Natural killer cell (primary cell): ENCODE measurements at regions of chr14 and their contacts with region 1.

Region 1: DNA sequence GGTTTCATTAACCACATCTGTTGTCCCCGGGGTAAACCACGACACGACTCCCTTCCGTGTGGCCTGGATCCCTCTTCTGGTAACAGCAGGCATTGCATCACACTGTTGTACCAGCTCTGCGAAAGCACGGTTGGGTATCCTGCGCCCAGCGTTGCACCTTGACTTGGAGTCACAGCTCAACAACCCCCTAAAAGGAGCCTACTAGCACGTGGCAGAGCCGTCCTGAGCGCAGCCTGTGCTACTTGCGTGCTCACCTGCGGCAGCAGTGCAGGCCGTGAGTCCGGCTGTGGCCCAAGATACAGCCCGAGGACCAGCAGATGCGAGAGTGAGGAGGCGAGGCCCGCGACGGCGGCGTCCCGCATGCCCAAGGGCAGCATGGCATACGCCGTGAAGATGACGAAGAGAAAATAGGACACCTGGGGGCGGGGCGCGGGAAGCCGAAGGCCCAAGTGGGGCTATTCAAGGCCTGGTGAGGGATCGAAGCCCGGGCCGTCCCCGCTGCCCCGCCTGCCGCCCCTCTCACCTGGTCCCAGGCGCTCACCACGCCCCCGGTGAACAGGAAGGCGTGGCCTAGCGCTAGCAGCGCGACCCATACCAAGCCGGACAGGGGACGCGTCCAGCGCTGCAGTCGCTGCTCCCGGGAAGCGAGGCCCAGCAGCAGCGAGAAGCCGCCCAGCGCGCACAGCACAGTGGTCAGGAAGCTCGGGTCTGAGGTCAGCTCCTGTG is 2.4 kb downstream of the ADCY4 start:
- DNase-seq: peak; percentile 70 to 96
- ATAC-seq: peak; percentile 57 to 75 (median 59)
- H3K4me3 ChIP-seq: peak overlapping the region; percentile 27
- H3K4me3 Mint-ChIP-seq: peak overlapping the region; percentile 93
- H3K27ac ChIP-seq: no peak overlapping the region
- H3K27ac Mint-ChIP-seq: peak overlapping the region; percentile 87 to 88
- H3K4me1 ChIP-seq: peaks cover 80% of the 10 kb centered on the region
- H3K4me1 Mint-ChIP-seq: peaks cover 79 to 84% of the 10 kb centered on the region in 2 donors
- H3K27me3 ChIP-seq: peaks cover 15% of the 10 kb centered on the region
- H3K27me3 Mint-ChIP-seq: peaks cover 14 to 16% of the 10 kb centered on the region in 2 donors
- CTCF ChIP-seq: peak; percentile 85

Region 2: DNA sequence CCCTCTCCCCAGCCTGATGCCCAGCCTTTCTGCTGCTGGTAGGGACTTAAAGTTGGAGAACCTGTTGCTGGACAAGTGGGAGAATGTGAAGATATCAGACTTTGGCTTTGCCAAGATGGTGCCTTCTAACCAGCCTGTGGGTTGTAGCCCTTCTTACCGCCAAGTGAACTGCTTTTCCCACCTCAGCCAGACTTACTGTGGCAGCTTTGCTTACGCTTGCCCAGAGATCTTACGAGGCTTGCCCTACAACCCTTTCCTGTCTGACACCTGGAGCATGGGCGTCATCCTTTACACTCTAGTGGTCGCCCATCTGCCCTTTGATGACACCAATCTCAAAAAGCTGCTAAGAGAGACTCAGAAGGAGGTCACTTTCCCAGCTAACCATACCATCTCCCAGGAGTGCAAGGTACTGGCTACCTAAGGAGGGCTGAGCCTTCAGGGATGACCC is 125.3 kb before region 1 on chr14:
- intact Hi-C with region 1: no loop called
- DNase-seq: peak in 1 of 2 donors; percentile 50
- ATAC-seq: peak; percentile 79 to 83 (median 83)
- H3K4me3 ChIP-seq: no peak overlapping the region
- H3K4me3 Mint-ChIP-seq: peak overlapping the region; percentile 14
- H3K27ac ChIP-seq: peak overlapping the region; percentile 32
- H3K27ac Mint-ChIP-seq: peak overlapping the region; percentile 86 to 87
- H3K4me1 ChIP-seq: peaks cover 15% of the 10 kb centered on the region
- H3K4me1 Mint-ChIP-seq: peaks cover 35 to 40% of the 10 kb centered on the region in 2 donors
- H3K27me3 ChIP-seq: no peaks in the 10 kb centered on the region
- H3K27me3 Mint-ChIP-seq: no peaks in the 10 kb centered on the region
- CTCF ChIP-seq: no peak

Region 3: DNA sequence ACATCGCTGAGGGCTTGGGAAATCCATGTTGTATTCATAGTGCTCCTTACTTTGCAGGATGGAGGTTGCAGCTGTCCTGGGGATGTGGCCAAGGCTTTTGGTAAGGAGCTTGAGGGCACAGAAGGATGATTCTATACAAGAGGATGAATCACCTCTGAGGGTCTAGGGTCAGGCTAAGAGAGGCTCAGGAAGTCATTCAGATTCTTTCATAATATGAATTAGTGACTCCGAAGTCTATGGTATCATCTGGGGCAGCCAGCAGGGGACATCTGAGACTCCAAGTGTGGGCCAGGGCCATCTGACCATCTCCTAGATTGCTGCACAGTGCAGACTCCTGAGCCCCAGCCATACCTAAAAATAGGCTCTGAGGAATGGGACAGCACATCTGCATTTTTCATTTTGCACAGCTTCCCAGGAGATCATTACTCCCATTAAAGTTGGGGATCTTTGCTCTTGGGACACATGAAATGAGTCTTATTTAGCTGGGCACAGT is 94.9 kb before region 1 on chr14:
- intact Hi-C with region 1: no loop called
- DNase-seq: no peak
- ATAC-seq: no peak
- H3K4me3 ChIP-seq: no peak overlapping the region
- H3K4me3 Mint-ChIP-seq: peak overlapping the region; percentile 14
- H3K27ac ChIP-seq: no peak overlapping the region
- H3K27ac Mint-ChIP-seq: peak overlapping the region; percentile 40 to 100
- H3K4me1 ChIP-seq: peaks cover 34% of the 10 kb centered on the region
- H3K4me1 Mint-ChIP-seq: peaks cover 69 to 85% of the 10 kb centered on the region in 2 donors
- H3K27me3 ChIP-seq: no peaks in the 10 kb centered on the region
- H3K27me3 Mint-ChIP-seq: no peaks in the 10 kb centered on the region
- CTCF ChIP-seq: no peak

Region 4: DNA sequence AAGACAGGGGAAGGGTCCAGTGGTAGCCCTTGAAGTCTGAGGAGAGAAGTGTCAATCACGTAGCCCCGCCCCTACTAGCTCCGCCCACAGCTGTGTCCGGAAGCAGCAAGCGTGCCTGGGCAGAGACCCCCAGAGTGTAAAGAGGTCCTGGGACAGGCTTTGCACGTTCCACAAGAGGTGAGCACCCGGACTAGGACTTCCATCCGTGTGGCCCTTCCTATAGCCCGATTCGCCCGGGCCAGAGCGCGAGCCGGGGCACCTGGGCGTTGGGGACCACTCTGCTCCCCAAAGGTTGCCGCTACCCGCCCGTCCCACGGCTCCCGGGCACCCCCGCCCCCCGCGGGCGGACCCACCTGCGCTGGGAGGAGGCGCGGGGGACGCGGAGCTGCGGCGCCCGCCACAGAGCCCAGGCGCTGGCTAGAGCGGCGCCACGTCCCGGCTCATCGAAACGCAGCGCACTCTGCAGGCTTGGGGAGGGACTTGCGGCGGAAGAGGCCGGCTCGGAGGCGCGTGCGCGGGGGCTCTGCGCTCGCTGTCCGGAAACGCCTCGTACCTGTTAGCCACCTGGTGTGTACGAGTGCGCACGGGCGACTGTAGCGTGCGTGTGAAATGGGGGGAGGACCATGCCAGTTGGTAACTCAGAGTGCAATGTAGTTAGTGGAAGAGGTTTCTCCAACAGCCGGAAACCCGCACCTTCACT is 61.1 kb before region 1 on chr14 and contains the start of gene RABGGTA:
- intact Hi-C with region 1: loop called (anchors 1 kb)
- DNase-seq: peak; percentile 92 to 99
- ATAC-seq: peak; percentile 84 to 94 (median 87)
- H3K4me3 ChIP-seq: peak within 1 kb of the TSS; percentile 88
- H3K4me3 Mint-ChIP-seq: peak within 1 kb of the TSS; percentile 94
- H3K27ac ChIP-seq: peak within 1 kb of the TSS; percentile 99
- H3K27ac Mint-ChIP-seq: peak within 1 kb of the TSS; percentile 91 to 92
- H3K4me1 ChIP-seq: peaks cover 30% of the 10 kb centered on the region
- H3K4me1 Mint-ChIP-seq: peaks cover 25 to 30% of the 10 kb centered on the region in 2 donors
- H3K27me3 ChIP-seq: no peaks in the 10 kb centered on the region
- H3K27me3 Mint-ChIP-seq: no peaks in the 10 kb centered on the region
- CTCF ChIP-seq: peak; percentile 63
- total RNA-seq, gene RABGGTA: 72.9 to 95.1 (median 88.5) TPM

Region 5: DNA sequence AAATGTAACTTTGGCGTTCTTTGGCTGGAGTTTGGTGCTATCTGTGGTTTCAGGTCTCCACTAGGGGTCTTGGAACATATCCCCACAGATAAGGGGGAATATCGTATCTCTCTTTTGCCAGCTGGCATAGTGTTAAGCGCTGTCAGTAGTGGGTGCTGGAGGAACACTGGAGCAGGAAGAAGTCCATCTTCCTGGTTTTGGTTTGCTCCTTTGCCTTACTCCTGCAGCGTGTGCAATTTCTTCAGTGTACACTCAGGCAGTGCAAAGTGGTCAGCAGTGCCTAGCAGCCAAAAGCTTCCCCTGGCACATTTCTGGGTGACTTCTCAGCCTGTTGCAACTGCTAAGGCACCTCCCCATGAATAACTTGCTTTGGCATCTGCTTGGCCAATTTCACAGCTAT is 19.1 kb after region 1 on chr14:
- intact Hi-C with region 1: no loop called
- DNase-seq: no peak
- ATAC-seq: no peak
- H3K4me3 ChIP-seq: no peak overlapping the region
- H3K4me3 Mint-ChIP-seq: no peak overlapping the region
- H3K27ac ChIP-seq: no peak overlapping the region
- H3K27ac Mint-ChIP-seq: no peak overlapping the region
- H3K4me1 ChIP-seq: no peaks in the 10 kb centered on the region
- H3K4me1 Mint-ChIP-seq: no peaks in the 10 kb centered on the region
- H3K27me3 ChIP-seq: peaks cover 3% of the 10 kb centered on the region
- H3K27me3 Mint-ChIP-seq: peaks cover 36 to 57% of the 10 kb centered on the region in 2 donors
- CTCF ChIP-seq: no peak

Region 6: DNA sequence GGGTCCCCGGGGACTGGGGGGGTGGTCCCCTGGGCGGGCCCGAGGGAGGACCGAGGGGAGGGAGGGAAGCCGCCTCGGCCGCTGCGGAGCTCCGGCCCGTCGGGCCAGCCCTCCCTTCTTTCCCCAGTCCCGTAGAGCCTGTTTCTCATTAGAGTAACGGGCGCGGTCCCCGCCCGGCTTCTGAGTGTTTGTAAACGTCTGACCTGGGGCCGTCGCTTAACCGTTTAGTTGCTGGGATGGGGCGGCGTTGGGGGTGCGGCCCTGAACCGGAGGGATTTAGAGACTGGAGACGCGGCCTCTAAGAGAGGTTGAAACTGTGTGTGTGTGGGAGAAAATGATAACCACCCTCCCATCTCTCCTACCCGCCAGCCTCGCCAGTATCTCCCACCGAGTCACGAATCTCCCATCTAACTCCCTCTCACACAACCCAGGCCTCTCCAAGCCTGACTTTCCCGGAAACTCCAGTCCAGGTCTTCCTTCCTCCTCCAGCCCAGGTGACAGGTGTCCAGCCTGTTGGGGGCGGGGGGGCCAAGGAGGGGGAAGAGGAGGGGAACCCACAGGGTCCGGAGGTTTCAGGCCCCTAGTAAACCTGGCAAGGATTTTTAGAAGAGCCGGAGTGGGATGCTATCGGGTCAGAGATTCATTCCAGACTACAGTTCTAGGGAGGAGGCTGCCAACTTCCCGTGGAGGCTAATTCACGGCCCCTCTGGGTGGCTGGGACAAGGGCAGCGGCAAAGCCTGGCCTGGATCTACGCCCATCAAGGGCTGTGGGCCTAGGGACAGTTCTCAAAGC is 34.5 kb after region 1 on chr14:
- intact Hi-C with region 1: loop called (anchors 5 kb)
- DNase-seq: peak; percentile 25 to 35
- ATAC-seq: peak; percentile 27 to 45 (median 36)
- H3K4me3 ChIP-seq: peak overlapping the region; percentile 27
- H3K4me3 Mint-ChIP-seq: peak overlapping the region; percentile 82
- H3K27ac ChIP-seq: no peak overlapping the region
- H3K27ac Mint-ChIP-seq: peak overlapping the region in 1 of 2 donors; percentile 53
- H3K4me1 ChIP-seq: peaks cover 37% of the 10 kb centered on the region
- H3K4me1 Mint-ChIP-seq: peaks cover 19 to 34% of the 10 kb centered on the region in 2 donors
- H3K27me3 ChIP-seq: peaks cover 39% of the 10 kb centered on the region
- H3K27me3 Mint-ChIP-seq: peaks cover 29 to 37% of the 10 kb centered on the region in 2 donors
- CTCF ChIP-seq: no peak

Region 7: GRCh38 chr14:24630872-24631477 is 298.5 kb after region 1 on chr14:
- intact Hi-C with region 1: loop called (anchors 1 kb)
- DNase-seq: no peak
- ATAC-seq: no peak
- H3K4me3 ChIP-seq: peak overlapping the region; percentile 72
- H3K4me3 Mint-ChIP-seq: peak overlapping the region; percentile 94
- H3K27ac ChIP-seq: peak overlapping the region; percentile 99
- H3K27ac Mint-ChIP-seq: peak overlapping the region; percentile 99
- H3K4me1 ChIP-seq: peaks cover 79% of the 10 kb centered on the region
- H3K4me1 Mint-ChIP-seq: peaks cover 86 to 89% of the 10 kb centered on the region in 2 donors
- H3K27me3 ChIP-seq: no peaks in the 10 kb centered on the region
- H3K27me3 Mint-ChIP-seq: no peaks in the 10 kb centered on the region
- CTCF ChIP-seq: no peak

Region 8: DNA sequence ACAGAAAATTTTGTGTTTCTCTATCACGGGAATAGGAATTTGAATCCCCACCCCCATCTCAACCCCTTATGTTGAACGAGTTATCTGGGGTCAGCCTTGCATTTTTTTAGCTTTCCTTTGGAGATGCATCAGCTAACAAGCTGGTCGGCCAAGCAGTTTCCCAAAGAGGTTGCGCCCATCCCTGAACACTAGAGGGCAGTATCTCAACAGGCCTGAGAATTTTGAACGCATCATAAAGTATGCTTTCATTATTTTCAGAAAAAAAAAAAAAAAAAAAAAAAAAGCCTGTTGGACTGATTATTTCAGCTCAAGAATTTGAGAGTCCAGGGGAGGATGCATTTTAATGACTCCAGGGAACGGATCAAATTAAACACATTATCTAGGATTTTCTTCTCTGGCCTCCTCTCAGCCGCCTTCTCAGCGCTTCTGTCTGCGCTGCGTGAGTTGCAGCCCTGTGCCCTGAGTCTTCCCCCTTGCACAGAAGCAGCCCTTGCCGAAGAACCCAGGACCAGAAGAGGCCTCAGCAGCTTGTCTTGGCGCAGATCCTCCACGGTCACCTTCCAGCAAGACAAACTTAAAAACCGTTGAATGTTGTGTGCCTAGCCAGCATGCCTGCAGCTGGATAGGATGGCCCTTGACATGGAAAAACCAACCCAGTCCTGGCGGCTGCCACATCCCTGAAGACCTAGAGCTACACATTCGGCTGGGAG is 378.1 kb after region 1 on chr14:
- intact Hi-C with region 1: no loop called
- DNase-seq: peak; percentile 55 to 77
- ATAC-seq: peak; percentile 77 to 91 (median 80)
- H3K4me3 ChIP-seq: no peak overlapping the region
- H3K4me3 Mint-ChIP-seq: no peak overlapping the region
- H3K27ac ChIP-seq: no peak overlapping the region
- H3K27ac Mint-ChIP-seq: peak overlapping the region in 1 of 2 donors; percentile 73
- H3K4me1 ChIP-seq: peaks cover 18% of the 10 kb centered on the region
- H3K4me1 Mint-ChIP-seq: peaks cover 31 to 40% of the 10 kb centered on the region in 2 donors
- H3K27me3 ChIP-seq: no peaks in the 10 kb centered on the region
- H3K27me3 Mint-ChIP-seq: peaks cover 4 to 8% of the 10 kb centered on the region in 2 donors
- CTCF ChIP-seq: peak; percentile 84

Region 9: GRCh38 chr14:25150934-25151790 is 818.7 kb after region 1 on chr14:
- intact Hi-C with region 1: loop called (anchors 10 kb)
- DNase-seq: peak in 1 of 2 donors; percentile 46
- ATAC-seq: peak in 2 of 3 donors; percentile 65 to 70
- H3K4me3 ChIP-seq: no peak overlapping the region
- H3K4me3 Mint-ChIP-seq: no peak overlapping the region
- H3K27ac ChIP-seq: no peak overlapping the region
- H3K27ac Mint-ChIP-seq: no peak overlapping the region
- H3K4me1 ChIP-seq: no peaks in the 10 kb centered on the region
- H3K4me1 Mint-ChIP-seq: no peaks in the 10 kb centered on the region
- H3K27me3 ChIP-seq: peaks cover 2% of the 10 kb centered on the region
- H3K27me3 Mint-ChIP-seq: peaks cover 18 to 39% of the 10 kb centered on the region in 2 donors
- CTCF ChIP-seq: peak; percentile 95